H1 (cell line): ENCODE measurements at regions of chr22 and their contacts with region 1.

Region 1: DNA sequence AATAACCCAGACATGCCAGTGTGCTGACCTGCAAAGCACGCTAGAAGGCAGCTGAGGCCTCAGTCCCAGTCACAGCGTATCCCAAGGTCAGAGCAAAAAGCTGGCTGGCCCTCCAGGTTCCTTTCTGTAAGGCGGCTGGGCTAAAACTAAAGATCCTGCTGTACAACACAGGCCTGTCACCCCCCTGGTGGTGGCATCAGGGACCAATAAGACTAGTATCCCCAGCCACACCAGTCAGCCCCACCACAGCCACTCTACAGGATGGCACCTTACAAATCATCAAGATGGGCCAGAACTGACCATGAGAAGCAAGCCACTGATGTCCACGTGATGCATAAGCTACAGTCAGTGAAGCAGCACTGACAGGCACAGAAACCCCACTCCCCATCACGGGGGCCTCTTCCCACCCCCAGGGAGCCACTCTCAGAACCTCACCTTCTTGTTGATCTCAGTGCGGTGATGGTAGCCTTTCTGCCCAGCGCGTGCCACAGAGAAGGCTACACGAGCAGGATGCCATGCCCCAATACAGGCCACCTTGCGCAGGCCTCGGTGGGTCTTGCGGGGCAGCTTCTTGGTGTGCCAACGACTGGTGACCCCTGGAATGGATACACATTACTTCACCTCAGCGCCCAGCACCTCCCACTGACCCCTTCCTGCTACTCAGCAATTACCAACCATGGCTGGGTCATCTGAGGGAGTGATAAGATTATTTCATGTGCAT is 5.0 kb downstream of the RPL3 start:
- DNase-seq: no peak
- H3K4me3 ChIP-seq: no peak overlapping the region
- H3K27ac ChIP-seq: no peak overlapping the region
- H3K4me1 ChIP-seq: peaks cover 0 to 24% (median 9%) of the 10 kb centered on the region in 4 experiments; a peak in 6 of 7 replicates
- H3K27me3 ChIP-seq: no peaks in the 10 kb centered on the region
- CTCF ChIP-seq: peak in 2 of 3 experiments; percentile 12 to 23; a peak in 1 of 4 replicates
- EP300 ChIP-seq: no peak
- POLR2A ChIP-seq: peak; percentile 35 to 65
- RAD21 ChIP-seq: no peak

Region 2: GRCh38 chr22:39220897-39221850 is 93.2 kb before region 1 on chr22:
- CTCF ChIA-PET with region 1: interaction called, 3 read pairs
- POLR2A ChIA-PET with region 1: interaction called, 28 read pairs
- DNase-seq: no peak
- H3K4me3 ChIP-seq: no peak overlapping the region
- H3K27ac ChIP-seq: no peak overlapping the region
- H3K4me1 ChIP-seq: peaks cover 0 to 4% (median 1%) of the 10 kb centered on the region in 4 experiments; a peak in 4 of 7 replicates
- H3K27me3 ChIP-seq: no peaks in the 10 kb centered on the region
- CTCF ChIP-seq: no peak
- EP300 ChIP-seq: no peak
- POLR2A ChIP-seq: no peak
- RAD21 ChIP-seq: no peak

Region 3: GRCh38 chr22:39244496-39245129 is 69.8 kb before region 1 on chr22 and contains the start of gene PDGFB:
- CTCF ChIA-PET with region 1: interaction called, 3 read pairs
- POLR2A ChIA-PET with region 1: interaction called, 89 read pairs
- DNase-seq: no peak
- H3K4me3 ChIP-seq: peak within 1 kb of the TSS; percentile 16 to 73 (median 56)
- H3K27ac ChIP-seq: no peak within 1 kb of the TSS
- H3K4me1 ChIP-seq: peaks cover 0 to 20% (median 18%) of the 10 kb centered on the region in 4 experiments; a peak in 6 of 7 replicates
- H3K27me3 ChIP-seq: peaks cover 26 to 81% (median 64%) of the 10 kb centered on the region in 4 experiments
- CTCF ChIP-seq: no peak
- EP300 ChIP-seq: no peak
- POLR2A ChIP-seq: no peak
- RAD21 ChIP-seq: no peak
- total RNA-seq, gene PDGFB: 8.5 and 9.6 TPM in 2 replicates

Region 4: GRCh38 chr22:39269095-39269790 is 45.2 kb before region 1 on chr22:
- CTCF ChIA-PET with region 1: interaction called, 5 read pairs
- POLR2A ChIA-PET with region 1: interaction called, 10 read pairs
- DNase-seq: no peak
- H3K4me3 ChIP-seq: no peak overlapping the region
- H3K27ac ChIP-seq: no peak overlapping the region
- H3K4me1 ChIP-seq: peaks cover 0 to 7% (median under 1%) of the 10 kb centered on the region in 4 experiments; a peak in 2 of 7 replicates
- H3K27me3 ChIP-seq: no peaks in the 10 kb centered on the region; a peak in 1 of 7 replicates
- CTCF ChIP-seq: no peak
- EP300 ChIP-seq: no peak
- POLR2A ChIP-seq: no peak
- RAD21 ChIP-seq: no peak

Region 5: DNA sequence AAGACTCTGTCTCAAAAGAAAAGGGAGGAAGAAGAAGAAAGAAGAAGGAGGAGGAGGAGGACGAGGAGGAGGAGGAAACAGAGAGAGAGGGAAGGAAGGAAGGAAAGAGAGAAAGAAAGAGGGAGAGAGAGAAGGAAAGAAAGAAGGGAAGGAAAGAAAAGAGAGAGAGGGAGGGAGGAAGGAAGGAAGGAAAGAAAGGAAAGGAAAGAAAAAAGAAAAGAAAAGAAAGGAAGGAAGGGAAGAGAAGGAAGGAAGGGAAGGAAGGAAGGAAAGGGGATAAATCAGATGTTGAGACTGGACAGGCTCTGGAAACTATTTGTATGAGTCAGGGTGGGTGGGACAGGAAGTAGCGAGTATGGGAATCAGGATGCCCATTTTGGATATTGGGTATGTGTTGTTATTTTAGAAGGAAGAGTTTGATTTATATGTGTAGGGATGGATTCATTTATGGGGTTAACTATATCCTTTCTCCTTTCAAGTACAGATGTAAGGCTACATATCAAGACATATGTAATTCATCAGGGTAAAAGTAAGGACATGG is 11.1 kb after region 1 on chr22:
- CTCF ChIA-PET with region 1: interaction called, 29 read pairs
- POLR2A ChIA-PET with region 1: interaction called, 692 read pairs
- DNase-seq: no peak
- H3K4me3 ChIP-seq: no peak overlapping the region
- H3K27ac ChIP-seq: no peak overlapping the region
- H3K4me1 ChIP-seq: no peaks in the 10 kb centered on the region
- H3K27me3 ChIP-seq: no peaks in the 10 kb centered on the region
- CTCF ChIP-seq: no peak
- EP300 ChIP-seq: no peak
- POLR2A ChIP-seq: no peak
- RAD21 ChIP-seq: no peak

Region 6: DNA sequence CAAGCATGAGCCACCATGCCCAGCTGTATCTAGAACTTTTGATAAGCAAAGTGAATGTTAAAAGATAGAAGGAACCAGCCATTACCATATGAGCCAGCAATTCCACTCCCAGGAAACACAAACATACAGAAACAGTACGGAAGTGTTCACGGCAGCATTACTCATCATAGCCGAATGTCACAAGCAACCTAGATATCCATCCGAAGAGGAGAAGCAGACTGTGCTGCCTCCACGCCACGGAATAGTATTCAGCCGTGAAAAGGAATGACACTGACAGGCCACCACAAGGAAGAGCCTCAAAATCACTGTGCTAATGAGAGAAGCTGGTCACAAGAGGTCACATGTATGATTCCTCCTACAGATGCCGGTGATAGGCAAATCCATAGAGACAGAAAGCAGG is 124.8 kb after region 1 on chr22:
- CTCF ChIA-PET with region 1: interaction called, 3 read pairs
- POLR2A ChIA-PET with region 1: interaction called, 35 read pairs
- DNase-seq: no peak
- H3K4me3 ChIP-seq: no peak overlapping the region
- H3K27ac ChIP-seq: no peak overlapping the region
- H3K4me1 ChIP-seq: peaks cover 0 to 8% (median 6%) of the 10 kb centered on the region in 4 experiments; a peak in 3 of 7 replicates
- H3K27me3 ChIP-seq: peaks cover 0 to 3% (median 1%) of the 10 kb centered on the region in 4 experiments; a peak in 2 of 7 replicates
- CTCF ChIP-seq: no peak
- EP300 ChIP-seq: no peak
- POLR2A ChIP-seq: no peak
- RAD21 ChIP-seq: no peak